ENCODE measurements at regions of chr13 and their contacts with region 1.

Region 1: DNA sequence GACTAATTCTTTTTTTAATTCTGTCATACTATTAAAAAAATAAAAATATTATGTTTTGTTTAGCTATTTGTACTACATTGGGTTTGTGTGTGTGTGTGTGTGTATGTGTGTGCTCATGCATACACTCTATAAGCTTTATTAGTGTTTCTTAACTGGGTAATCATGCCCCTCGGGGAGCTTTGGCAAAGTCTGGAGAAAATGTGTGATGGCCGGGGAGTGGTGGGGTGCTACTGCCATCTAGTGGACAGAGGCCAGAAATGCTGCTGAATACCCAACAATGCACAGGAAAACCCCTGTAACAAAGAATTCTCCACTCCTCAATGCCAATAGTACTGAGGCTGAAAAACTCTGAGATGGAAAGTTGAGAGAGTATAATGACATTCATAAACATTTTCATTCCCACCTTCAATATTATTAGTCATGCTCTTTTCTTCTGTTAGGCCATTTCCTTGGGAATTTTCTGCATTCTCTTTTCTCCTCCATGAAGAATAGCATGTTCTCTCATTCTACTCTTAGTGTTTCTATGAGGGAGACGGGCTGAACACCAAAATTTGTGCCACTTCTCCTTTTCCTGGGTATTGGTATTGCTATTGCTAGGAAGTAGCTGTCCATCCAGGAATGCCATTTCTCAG is 157.3 kb downstream of the DNAJC3 start:
- DNase-seq: peak; percentile 61
- ATAC-seq: peak; percentile 75
- H3K4me3 ChIP-seq: no peak overlapping the region
- H3K27ac ChIP-seq: no peak overlapping the region
- H3K4me1 ChIP-seq: peaks cover 13% of the 10 kb centered on the region
- H3K27me3 ChIP-seq: no peaks in the 10 kb centered on the region
- CTCF ChIP-seq: peak; percentile 80

Region 2: GRCh38 chr13:95403828-95404522 is 430.3 kb before region 1 on chr13:
- CTCF ChIA-PET with region 1: interaction called, 4 read pairs
- POLR2A ChIA-PET with region 1: no interaction called
- intact Hi-C with region 1: loop called (anchors 10 kb)
- DNase-seq: peak; percentile 85
- ATAC-seq: peak; percentile 83
- H3K4me3 ChIP-seq: peak overlapping the region; percentile 63
- H3K27ac ChIP-seq: no peak overlapping the region
- H3K4me1 ChIP-seq: no peaks in the 10 kb centered on the region
- H3K27me3 ChIP-seq: no peaks in the 10 kb centered on the region
- CTCF ChIP-seq: peak; percentile 90

Region 3: GRCh38 chr13:95536632-95537241 is 297.5 kb before region 1 on chr13:
- CTCF ChIA-PET with region 1: interaction called, 8 read pairs
- POLR2A ChIA-PET with region 1: no interaction called
- intact Hi-C with region 1: loop called (anchors 1 kb)
- DNase-seq: peak; percentile 67
- ATAC-seq: no peak
- H3K4me3 ChIP-seq: no peak overlapping the region
- H3K27ac ChIP-seq: no peak overlapping the region
- H3K4me1 ChIP-seq: peaks cover 37% of the 10 kb centered on the region
- H3K27me3 ChIP-seq: no peaks in the 10 kb centered on the region
- CTCF ChIP-seq: peak; percentile 63

Region 4: DNA sequence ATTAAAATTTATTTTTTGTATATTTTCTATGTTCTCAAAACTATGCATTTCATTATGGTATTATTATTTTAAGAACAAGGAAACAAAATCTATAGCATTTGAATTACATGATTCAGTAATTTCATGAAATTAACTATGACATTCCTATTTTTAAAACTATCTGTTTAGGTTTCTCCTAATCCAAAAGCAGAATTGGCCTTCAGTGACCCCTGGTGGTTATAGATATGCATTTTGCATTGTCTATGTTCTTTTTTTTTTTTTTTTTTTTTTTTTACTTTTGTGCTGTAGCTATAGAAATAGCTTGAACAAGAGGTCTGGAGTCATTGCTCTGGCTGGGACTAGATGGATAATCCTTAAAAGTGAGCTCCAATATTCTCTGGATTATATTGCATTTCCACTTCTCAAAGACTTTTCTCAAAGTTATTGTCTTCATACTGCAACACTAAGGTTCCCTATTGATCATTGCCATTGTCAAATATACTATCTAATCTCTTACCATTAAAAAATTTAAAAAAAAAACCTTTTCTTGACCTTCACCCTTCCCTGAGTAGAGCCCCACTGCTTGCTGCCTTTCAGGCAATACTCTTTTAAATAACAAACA is 173.2 kb before region 1 on chr13:
- CTCF ChIA-PET with region 1: interaction called, 17 read pairs
- POLR2A ChIA-PET with region 1: no interaction called
- intact Hi-C with region 1: loop called (anchors 1 kb)
- DNase-seq: peak; percentile 64
- ATAC-seq: no peak
- H3K4me3 ChIP-seq: no peak overlapping the region
- H3K27ac ChIP-seq: no peak overlapping the region
- H3K4me1 ChIP-seq: no peaks in the 10 kb centered on the region
- H3K27me3 ChIP-seq: no peaks in the 10 kb centered on the region
- CTCF ChIP-seq: peak; percentile 61

Region 5: GRCh38 chr13:95924389-95924994 is 90.2 kb after region 1 on chr13:
- CTCF ChIA-PET with region 1: no interaction called
- POLR2A ChIA-PET with region 1: no interaction called
- intact Hi-C with region 1: no loop called
- DNase-seq: peak; percentile 40
- ATAC-seq: peak; percentile 84
- H3K4me3 ChIP-seq: no peak overlapping the region
- H3K27ac ChIP-seq: no peak overlapping the region
- H3K4me1 ChIP-seq: no peaks in the 10 kb centered on the region
- H3K27me3 ChIP-seq: no peaks in the 10 kb centered on the region
- CTCF ChIP-seq: no peak

Region 6: GRCh38 chr13:95982144-95982543 is 147.9 kb after region 1 on chr13:
- CTCF ChIA-PET with region 1: no interaction called
- POLR2A ChIA-PET with region 1: no interaction called
- intact Hi-C with region 1: loop called (anchors 1 kb)
- DNase-seq: no peak
- ATAC-seq: no peak
- H3K4me3 ChIP-seq: no peak overlapping the region
- H3K27ac ChIP-seq: no peak overlapping the region
- H3K4me1 ChIP-seq: no peaks in the 10 kb centered on the region
- H3K27me3 ChIP-seq: no peaks in the 10 kb centered on the region
- CTCF ChIP-seq: no peak